ENCODE measurements at regions of chr5 and their contacts with region 1.

Region 1: DNA sequence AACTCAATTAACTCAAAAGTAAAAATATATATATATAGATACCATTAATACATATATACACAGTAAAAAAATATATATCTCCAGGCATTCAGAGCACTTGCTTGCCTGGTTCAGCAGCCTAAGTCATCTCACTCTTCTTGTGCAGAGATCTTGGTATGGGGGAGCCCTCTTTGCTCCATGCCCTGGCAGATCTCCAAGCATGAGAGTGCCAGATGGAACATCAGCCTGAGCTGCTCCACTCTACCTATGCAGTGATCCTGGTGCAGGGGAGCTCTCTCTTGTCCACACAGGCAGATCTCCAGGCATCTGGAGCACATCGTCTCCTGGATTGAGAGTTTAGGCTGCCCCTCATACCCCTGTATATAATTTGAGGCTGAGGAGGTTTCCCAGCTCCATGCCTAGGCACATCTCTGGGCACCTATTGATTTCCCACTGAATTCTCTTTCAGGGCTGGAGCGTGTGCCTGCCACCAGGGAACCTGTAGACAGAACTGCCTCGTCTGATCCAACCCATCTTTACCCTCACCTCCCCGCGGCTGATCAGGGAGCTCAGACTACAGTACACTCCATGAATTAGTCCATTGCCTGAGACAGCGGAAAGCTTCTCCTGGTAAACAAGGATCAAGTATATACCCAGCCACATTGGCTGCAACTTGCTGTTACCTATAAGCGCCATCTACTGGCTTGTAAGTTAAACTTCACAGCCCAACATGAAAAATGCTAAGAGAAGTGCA is 342.4 kb upstream of the GRIA1 start:
- DNase-seq: peak; percentile 11
- ATAC-seq: peak; percentile 54
- H3K4me3 ChIP-seq: no peak overlapping the region
- H3K27ac ChIP-seq: no peak overlapping the region
- H3K4me1 ChIP-seq: no peaks in the 10 kb centered on the region
- H3K27me3 ChIP-seq: no peaks in the 10 kb centered on the region; a peak in 1 of 5 replicates
- CTCF ChIP-seq: peak; percentile 46
- EP300 ChIP-seq: no peak
- POLR2A ChIP-seq: no peak
- RAD21 ChIP-seq: no peak

Region 2: DNA sequence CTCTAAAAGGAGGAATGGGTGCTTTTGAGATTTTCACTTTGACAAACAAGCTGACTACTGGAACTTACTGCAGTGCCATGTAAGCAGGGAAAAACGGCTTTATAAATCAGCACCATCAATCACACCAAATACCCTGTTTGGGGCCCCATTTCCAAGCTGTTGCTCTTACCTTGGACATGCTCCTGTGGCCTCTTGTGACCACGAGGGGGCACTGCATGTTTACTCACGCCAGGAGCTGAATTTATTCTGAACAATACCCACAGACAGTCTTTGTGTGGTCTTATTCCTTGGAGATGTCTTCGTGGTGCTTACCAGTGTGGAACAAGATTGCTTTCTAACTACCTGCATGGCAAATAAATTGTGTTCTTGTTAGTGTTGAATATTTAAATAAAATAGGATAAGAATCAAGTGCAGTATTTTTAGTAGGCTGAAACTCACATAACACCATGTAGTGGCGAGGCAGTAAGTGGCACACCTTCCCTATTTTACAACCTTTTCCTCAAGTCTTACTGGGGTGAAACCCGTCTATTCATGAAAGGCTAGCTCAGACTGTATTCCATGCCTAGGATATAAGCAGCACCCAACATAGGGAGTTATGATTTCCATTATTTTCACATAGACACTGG is 587.4 kb before region 1 on chr5:
- CTCF ChIA-PET with region 1: interaction called, 5 read pairs
- POLR2A ChIA-PET with region 1: no interaction called
- in situ Hi-C with region 1: loop called (anchors 25 kb)
- intact Hi-C with region 1: no loop called
- DNase-seq: peak; percentile 13
- ATAC-seq: peak; percentile 78
- H3K4me3 ChIP-seq: no peak overlapping the region
- H3K27ac ChIP-seq: no peak overlapping the region
- H3K4me1 ChIP-seq: no peaks in the 10 kb centered on the region
- H3K27me3 ChIP-seq: no peaks in the 10 kb centered on the region
- CTCF ChIP-seq: peak; percentile 70
- EP300 ChIP-seq: no peak
- POLR2A ChIP-seq: no peak
- RAD21 ChIP-seq: no peak

Region 3: DNA sequence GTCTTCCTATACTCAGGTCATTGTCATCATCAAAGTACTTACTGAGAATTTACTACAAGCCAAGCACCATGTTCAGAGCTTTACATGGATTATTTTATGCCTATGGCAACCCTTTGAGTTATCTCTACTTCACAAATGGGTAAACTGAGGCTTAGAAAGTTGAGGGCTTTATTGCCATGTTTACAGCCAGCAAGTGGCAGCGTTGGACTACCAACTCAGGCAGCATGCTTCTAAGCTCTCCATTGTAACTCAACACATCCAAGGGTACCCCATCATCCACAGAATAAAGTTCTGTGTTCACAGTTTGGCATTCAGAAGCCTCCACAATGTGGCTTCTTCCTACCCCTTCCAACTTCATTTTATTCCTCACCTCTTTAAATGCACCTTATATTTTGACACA is 80.2 kb before region 1 on chr5:
- CTCF ChIA-PET with region 1: no interaction called
- POLR2A ChIA-PET with region 1: no interaction called
- in situ Hi-C with region 1: no loop called
- intact Hi-C with region 1: no loop called
- DNase-seq: no peak
- ATAC-seq: no peak
- H3K4me3 ChIP-seq: no peak overlapping the region
- H3K27ac ChIP-seq: no peak overlapping the region
- H3K4me1 ChIP-seq: no peaks in the 10 kb centered on the region
- H3K27me3 ChIP-seq: no peaks in the 10 kb centered on the region
- CTCF ChIP-seq: no peak
- EP300 ChIP-seq: no peak
- POLR2A ChIP-seq: no peak
- RAD21 ChIP-seq: no peak